ENCODE measurements at regions of chr15 and their contacts with region 1.

Region 1: DNA sequence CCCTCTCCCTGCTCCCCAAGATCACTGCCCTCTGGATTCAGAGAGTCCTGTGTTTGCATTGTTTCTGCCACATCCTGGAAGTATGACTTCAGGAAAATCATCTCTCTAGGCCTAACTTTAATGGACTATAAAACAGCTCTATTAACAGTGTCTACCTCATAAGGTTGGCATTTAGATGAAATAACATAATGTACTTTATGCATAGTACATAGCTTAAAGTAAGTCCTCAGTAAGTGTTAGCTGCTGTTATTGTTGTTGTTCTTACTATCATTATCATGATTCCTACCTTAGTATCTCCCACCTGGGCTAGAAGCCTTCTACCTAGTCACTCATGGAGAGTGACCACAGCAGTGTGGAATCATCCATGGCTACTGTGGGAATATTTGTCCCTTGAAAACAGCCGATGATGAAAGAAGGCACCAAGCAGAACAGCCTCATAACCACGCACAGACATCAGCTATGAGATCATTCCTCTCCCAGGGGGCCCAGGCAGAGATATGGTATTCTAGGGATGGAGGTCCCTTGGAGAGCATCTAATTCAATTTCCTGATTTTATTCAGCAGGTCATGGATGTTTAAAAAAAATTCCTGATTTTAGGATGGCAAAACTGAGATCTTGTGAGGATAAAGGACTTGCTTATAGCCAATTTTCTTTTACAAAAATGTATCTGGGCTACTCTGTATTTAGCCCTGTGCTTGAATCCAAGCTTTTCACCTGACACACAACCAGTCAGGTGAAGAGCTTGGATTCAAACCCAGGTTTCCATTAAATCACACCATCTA is 1.9 kb downstream of the FSD2 start:
- DNase-seq: no peak
- H3K4me3 ChIP-seq: no peak overlapping the region
- H3K27ac ChIP-seq: peak overlapping the region; percentile 45 to 84 (median 81)
- H3K4me1 ChIP-seq: peaks cover 14 to 34% of the 10 kb centered on the region in 2 donors
- H3K27me3 ChIP-seq: no peaks in the 10 kb centered on the region
- CTCF ChIP-seq: no peak
- POLR2A ChIP-seq: no peak

Region 2: GRCh38 chr15:82624008-82624837 is 179.8 kb before region 1 on chr15:
- intact Hi-C with region 1: no loop called
- DNase-seq: no peak
- H3K4me3 ChIP-seq: no peak overlapping the region
- H3K27ac ChIP-seq: no peak overlapping the region
- H3K4me1 ChIP-seq: no peaks in the 10 kb centered on the region
- H3K27me3 ChIP-seq: no peaks in the 10 kb centered on the region
- CTCF ChIP-seq: no peak
- POLR2A ChIP-seq: no peak

Region 3: DNA sequence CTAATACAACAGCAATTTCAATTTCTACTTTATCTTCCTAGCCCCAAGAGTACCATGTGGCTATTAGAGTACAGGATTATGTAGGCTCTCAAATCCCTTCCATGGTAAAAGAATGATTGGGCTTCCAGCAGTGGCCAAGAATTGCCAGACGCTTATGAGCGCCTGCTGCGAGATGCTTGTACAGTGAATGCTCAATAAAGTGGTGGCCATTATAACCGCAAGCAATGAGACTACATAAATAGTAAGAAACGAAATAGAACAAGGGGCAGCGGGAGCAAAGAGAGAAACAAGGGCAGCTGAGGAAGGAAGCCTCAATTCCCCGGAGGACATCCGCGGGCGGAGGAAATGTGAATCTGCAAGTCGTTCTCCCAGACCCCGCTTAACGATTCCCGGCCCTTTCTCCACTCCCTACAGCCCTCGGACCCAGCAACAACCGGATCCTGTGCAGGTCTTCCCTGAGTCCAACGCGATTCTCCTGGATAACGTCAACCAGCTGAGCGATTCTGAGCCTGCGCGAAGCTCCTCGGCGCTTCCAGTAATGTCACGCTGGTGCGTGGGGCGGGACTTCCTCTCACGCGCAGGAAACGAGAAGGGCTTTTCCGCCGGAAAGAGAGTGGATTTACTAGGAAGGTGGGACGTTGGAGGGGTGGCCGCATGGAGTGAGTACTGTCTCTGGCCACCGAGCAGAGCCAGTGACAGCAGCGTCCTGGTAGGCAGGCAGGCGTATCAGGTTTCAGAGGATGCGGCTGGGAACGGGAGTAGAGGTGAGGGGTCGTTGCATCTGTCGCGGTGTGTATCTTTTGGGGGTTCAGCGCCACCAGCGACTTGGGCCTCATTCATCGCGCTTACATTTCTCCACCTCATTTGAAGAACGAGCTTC is 53.8 kb before region 1 on chr15:
- intact Hi-C with region 1: loop called (anchors 5 kb)
- DNase-seq: peak; percentile 94 to 95
- H3K4me3 ChIP-seq: peak overlapping the region; percentile 26 to 81 (median 61)
- H3K27ac ChIP-seq: peak overlapping the region; percentile 53 to 97 (median 88)
- H3K4me1 ChIP-seq: peaks cover 18% of the 10 kb centered on the region in 2 donors
- H3K27me3 ChIP-seq: no peaks in the 10 kb centered on the region
- CTCF ChIP-seq: no peak
- POLR2A ChIP-seq: peak in 1 of 2 donors; percentile 95

Region 4: GRCh38 chr15:82856397-82857170 is 52.6 kb after region 1 on chr15:
- intact Hi-C with region 1: no loop called
- DNase-seq: peak; percentile 72 to 79
- H3K4me3 ChIP-seq: no peak overlapping the region
- H3K27ac ChIP-seq: peak overlapping the region; percentile 65 to 73 (median 70)
- H3K4me1 ChIP-seq: peaks cover 12 to 16% of the 10 kb centered on the region in 2 donors
- H3K27me3 ChIP-seq: no peaks in the 10 kb centered on the region
- CTCF ChIP-seq: no peak
- POLR2A ChIP-seq: peak in 1 of 2 donors; percentile 14